ENCODE measurements at regions of chr11 and their contacts with region 1.

Region 1: DNA sequence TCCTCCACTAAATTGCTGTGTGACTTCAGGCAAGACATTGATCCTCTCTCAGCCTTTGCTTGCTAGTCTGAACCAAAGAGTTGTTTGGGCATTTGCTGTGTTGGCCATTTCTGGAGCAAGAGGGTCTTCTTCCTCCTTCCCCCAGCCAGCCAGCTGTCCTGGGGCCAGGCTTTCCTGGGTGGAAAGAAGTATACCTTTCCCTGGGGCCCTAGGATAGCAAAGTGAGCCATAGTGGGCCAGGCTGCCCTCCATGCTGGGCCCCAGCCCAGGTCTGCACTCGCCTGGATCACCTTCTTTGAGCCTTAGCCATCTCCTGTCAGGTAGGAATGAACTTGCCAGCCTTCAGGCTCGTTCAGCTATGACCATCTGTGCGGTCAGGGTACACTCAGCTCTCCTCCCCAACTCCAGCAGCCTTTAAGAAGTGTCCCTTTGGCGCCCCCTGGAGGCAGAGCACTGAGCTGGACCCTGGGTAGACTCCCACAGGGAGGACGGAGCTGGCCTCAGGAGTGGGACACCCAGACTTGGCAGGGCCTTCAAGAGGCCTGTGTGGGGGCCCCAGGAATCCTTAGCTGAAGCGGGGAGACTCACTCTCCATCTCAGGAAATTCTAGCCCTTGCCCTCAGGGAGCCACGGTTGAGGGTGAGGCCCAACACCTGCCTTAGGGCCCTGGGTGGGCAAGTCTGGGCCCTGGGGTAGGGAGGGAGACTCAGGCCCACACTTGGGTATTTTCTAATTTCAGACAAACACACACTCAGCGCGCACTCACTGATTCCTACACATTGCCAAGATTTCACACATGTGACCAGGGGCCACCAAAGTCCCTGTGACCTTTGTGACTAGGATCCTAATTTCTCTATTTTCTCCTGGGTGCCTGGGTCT is 35.6 kb upstream of the TPBGL start:
- DNase-seq: peak; percentile 72
- H3K4me3 ChIP-seq: no peak overlapping the region
- H3K27ac ChIP-seq: no peak overlapping the region
- H3K4me1 ChIP-seq: no peaks in the 10 kb centered on the region
- H3K27me3 ChIP-seq: peaks cover 16% of the 10 kb centered on the region in 2 experiments
- CTCF ChIP-seq: peak; percentile 82 to 97
- POLR2A ChIP-seq: no peak

Region 2: GRCh38 chr11:74937696-74938475 is 267.0 kb before region 1 on chr11:
- CTCF ChIA-PET with region 1: interaction called, 106 read pairs
- POLR2A ChIA-PET with region 1: no interaction called
- dilution Hi-C with region 1: no loop called
- intact Hi-C with region 1: no loop called
- DNase-seq: peak; percentile 71
- H3K4me3 ChIP-seq: no peak overlapping the region
- H3K27ac ChIP-seq: peak overlapping the region; percentile 70
- H3K4me1 ChIP-seq: peaks cover 24% of the 10 kb centered on the region
- H3K27me3 ChIP-seq: no peaks in the 10 kb centered on the region
- CTCF ChIP-seq: no peak
- POLR2A ChIP-seq: no peak

Region 3: DNA sequence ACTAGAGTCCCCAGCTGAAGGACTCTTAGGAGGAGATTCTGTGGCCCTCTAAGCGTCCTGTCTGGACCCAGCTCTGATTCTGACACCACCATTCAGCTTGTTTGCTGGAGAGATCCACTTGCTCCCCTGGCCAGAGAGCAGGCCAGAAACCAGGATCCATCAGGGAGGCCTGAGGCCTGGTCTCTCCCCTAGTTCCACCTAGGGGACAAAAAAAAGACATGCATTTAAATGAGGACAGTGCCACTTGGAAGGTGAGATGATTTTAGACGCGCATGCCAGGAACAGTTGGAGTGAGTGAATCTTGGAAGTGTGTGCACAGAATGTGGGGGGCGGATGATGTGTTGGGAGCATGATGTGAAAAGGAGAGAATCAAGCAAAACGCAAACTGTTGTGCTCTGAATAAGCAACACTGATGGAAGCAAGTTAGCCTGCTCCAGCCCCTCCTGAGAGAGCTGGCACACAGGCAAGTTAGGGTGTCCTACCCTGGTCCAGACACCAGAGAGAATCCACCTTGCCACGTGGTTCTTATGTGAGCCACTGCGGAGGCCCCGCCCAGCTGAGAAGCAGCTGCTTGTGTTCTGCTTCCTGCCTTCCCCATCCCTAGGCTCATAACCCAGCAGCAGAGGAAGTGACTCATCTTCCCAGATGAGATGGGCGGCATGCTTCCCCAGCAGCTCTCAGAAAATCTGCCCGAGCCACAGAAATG is 62.1 kb before region 1 on chr11:
- CTCF ChIA-PET with region 1: interaction called, 1,202 read pairs
- POLR2A ChIA-PET with region 1: interaction called, 5 read pairs
- dilution Hi-C with region 1: no loop called
- intact Hi-C with region 1: loop called (anchors 1 kb)
- DNase-seq: peak; percentile 90
- H3K4me3 ChIP-seq: no peak overlapping the region
- H3K27ac ChIP-seq: peak overlapping the region; percentile 6
- H3K4me1 ChIP-seq: peaks cover 16% of the 10 kb centered on the region
- H3K27me3 ChIP-seq: peaks cover 2 to 9% of the 10 kb centered on the region in 2 experiments
- CTCF ChIP-seq: no peak
- POLR2A ChIP-seq: no peak

Region 4: DNA sequence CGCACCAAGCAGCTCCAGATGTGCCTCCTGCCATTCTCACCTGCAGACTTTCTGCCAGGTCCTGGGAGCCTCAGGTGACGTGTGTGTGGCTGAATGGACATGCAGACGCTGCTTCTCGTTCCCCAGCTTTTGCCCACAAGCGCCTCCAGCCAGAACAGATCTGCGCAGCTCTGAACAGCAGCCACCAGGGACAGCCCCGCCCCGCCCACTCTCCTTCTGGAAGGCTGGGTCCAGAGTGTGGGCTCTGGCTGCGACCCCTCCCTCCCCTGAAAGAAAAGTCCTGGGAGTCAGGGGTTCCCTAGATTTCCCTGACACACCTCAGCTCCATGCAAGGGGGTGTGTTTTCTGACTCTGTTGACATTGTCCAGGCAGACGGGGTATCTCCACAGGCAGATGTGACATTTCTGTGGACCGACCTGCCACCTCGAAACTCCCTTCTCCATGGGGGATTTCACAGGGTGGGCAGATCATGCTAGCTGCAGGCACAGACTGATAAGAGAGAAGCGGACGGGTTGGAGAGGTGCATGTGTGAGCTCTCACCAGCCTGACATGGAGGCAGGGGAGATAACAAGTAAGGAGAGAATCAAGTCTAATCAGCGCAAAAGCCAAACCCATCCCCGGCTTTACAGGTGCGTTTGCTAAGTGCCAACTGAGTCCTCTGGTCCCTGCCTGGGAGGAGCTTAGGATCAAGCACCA is 34.3 kb before region 1 on chr11:
- CTCF ChIA-PET with region 1: interaction called, 20 read pairs
- POLR2A ChIA-PET with region 1: no interaction called
- dilution Hi-C with region 1: no loop called
- intact Hi-C with region 1: no loop called
- DNase-seq: no peak
- H3K4me3 ChIP-seq: no peak overlapping the region
- H3K27ac ChIP-seq: no peak overlapping the region
- H3K4me1 ChIP-seq: no peaks in the 10 kb centered on the region
- H3K27me3 ChIP-seq: peaks cover 2 to 5% of the 10 kb centered on the region in 2 experiments
- CTCF ChIP-seq: no peak
- POLR2A ChIP-seq: no peak

Region 5: GRCh38 chr11:75223954-75224643 is 19.2 kb after region 1 on chr11:
- CTCF ChIA-PET with region 1: interaction called, 17 read pairs
- POLR2A ChIA-PET with region 1: no interaction called
- dilution Hi-C with region 1: no loop called
- intact Hi-C with region 1: no loop called
- DNase-seq: no peak
- H3K4me3 ChIP-seq: no peak overlapping the region
- H3K27ac ChIP-seq: no peak overlapping the region
- H3K4me1 ChIP-seq: no peaks in the 10 kb centered on the region
- H3K27me3 ChIP-seq: peaks cover 2 to 3% of the 10 kb centered on the region in 2 experiments
- CTCF ChIP-seq: no peak
- POLR2A ChIP-seq: no peak

Region 6: DNA sequence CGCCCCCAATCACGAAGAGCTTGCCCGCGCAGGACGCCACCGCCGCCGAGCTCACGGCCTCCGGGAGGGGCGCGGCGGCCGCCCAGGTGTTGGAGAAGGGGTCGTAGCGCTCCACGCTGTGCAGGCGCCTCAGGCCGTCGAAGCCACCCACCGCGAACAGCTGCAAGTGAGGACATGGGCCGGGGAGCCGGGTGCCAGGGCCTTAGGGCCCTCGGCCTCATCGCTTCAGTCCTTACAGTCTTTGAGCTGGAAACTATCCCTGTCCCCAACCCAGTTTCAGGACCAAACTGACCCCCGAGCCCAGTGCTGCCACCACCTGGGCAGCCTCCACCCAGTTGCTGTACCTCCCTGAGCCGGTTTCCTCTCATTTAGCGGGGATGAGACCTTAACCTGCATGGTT is 220.5 kb after region 1 on chr11:
- CTCF ChIA-PET with region 1: no interaction called
- POLR2A ChIA-PET with region 1: no interaction called
- dilution Hi-C with region 1: no loop called
- intact Hi-C with region 1: no loop called
- DNase-seq: no peak
- H3K4me3 ChIP-seq: no peak overlapping the region
- H3K27ac ChIP-seq: no peak overlapping the region
- H3K4me1 ChIP-seq: peaks cover 4% of the 10 kb centered on the region
- H3K27me3 ChIP-seq: peaks cover under 1 to 6% of the 10 kb centered on the region in 2 experiments
- CTCF ChIP-seq: peak; percentile 24 to 25
- POLR2A ChIP-seq: no peak

Region 7: DNA sequence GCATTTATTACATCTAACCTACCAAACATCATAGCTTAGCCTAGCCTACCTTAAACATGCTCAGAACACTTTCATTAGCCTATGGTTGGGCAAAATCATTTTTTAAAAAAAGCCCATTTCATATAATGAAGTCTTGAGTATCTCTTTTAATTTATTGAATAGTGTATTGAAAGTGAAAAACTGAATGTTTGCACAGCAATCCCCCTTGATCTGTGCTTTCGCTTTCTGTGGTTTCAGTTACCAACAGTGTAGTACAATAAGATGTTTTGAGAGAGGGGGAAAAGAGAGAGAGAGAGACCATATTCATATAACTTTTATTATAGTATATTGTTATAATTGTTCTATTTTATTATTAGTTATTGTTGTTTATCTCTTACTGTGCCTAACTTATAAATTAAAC is 472.4 kb after region 1 on chr11:
- CTCF ChIA-PET with region 1: no interaction called
- POLR2A ChIA-PET with region 1: no interaction called
- dilution Hi-C with region 1: no loop called
- intact Hi-C with region 1: no loop called
- DNase-seq: no peak
- H3K4me3 ChIP-seq: no peak overlapping the region
- H3K27ac ChIP-seq: no peak overlapping the region
- H3K4me1 ChIP-seq: no peaks in the 10 kb centered on the region
- H3K27me3 ChIP-seq: peaks cover 12 to 22% of the 10 kb centered on the region in 2 experiments
- CTCF ChIP-seq: no peak
- POLR2A ChIP-seq: no peak

Measured in endothelial cell of umbilical vein (primary cell).